Heart right ventricle (tissue), 16 donors: ENCODE measurements at regions of chr4 and their contacts with region 1.

Region 1: GRCh38 chr4:3106339-3107186 is 32.1 kb downstream of the HTT start:
- DNase-seq: peak; percentile 85 to 88
- ATAC-seq: peak; percentile 94 to 98 (median 98)
- H3K4me3 ChIP-seq: no peak overlapping the region
- H3K27ac ChIP-seq: peak overlapping the region in 5 of 10 donors; percentile 19 to 70 (median 57)
- H3K4me1 ChIP-seq: peaks cover 14 to 44% (median 29%) of the 10 kb centered on the region in 9 donors
- H3K27me3 ChIP-seq: no peaks in the 10 kb centered on the region
- CTCF ChIP-seq: peak; percentile 96 to 100 (median 98)

Region 2: DNA sequence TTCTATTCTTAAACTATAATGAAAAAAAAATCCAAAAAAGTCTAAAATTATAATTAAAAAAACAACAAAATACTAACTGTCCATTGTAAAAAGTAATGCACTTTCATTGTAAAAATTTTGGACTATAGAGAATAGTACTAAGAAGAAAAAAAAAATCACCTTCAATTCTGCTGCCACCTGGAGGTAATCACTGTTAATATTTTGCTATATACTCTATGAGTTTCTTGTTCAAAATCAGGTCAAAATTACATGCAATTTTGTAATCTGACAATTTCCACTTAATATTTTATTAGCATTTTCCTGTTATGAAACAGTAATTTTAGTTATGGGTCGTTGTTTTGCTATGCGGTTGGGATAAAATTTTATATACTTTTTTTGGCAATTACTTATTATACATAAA is 29.9 kb after region 1 on chr4:
- intact Hi-C with region 1: loop called in 2 of 10 experiments (anchors 1 to 2 kb)
- DNase-seq: no peak
- ATAC-seq: no peak
- H3K4me3 ChIP-seq: no peak overlapping the region
- H3K27ac ChIP-seq: no peak overlapping the region
- H3K4me1 ChIP-seq: peaks cover 0 to 4% (median 0%) of the 10 kb centered on the region in 9 donors
- H3K27me3 ChIP-seq: no peaks in the 10 kb centered on the region
- CTCF ChIP-seq: peak in 8 of 9 donors; percentile 12 to 60 (median 42)

Region 3: DNA sequence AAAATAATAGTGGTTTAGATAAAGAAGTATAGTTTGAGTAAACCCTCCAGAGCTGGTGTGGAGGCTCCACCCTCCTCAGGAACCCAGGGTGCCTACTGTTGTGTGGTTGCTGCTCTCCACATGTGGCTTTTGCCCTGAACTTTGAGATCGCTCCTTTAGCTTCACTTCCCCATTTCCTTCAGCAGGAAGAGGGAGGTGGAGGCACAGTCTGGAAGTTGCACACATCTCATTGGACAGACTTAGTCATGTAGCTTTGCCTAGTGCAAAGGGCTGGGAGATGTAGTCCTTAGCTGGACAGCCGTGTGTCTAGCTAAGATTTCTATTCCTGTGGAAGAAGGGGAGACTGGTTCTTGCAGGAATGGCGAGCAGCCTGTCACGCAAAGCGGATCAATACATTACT is 224.1 kb after region 1 on chr4:
- intact Hi-C with region 1: loop called in 1 of 10 experiments (anchors 10 kb)
- DNase-seq: no peak
- ATAC-seq: peak in 4 of 8 donors; percentile 35 to 59 (median 46)
- H3K4me3 ChIP-seq: no peak overlapping the region
- H3K27ac ChIP-seq: peak overlapping the region in 4 of 10 donors; percentile 41 to 86 (median 78)
- H3K4me1 ChIP-seq: peaks cover 0 to 51% (median 22%) of the 10 kb centered on the region in 9 donors
- H3K27me3 ChIP-seq: no peaks in the 10 kb centered on the region
- CTCF ChIP-seq: no peak

Region 4: DNA sequence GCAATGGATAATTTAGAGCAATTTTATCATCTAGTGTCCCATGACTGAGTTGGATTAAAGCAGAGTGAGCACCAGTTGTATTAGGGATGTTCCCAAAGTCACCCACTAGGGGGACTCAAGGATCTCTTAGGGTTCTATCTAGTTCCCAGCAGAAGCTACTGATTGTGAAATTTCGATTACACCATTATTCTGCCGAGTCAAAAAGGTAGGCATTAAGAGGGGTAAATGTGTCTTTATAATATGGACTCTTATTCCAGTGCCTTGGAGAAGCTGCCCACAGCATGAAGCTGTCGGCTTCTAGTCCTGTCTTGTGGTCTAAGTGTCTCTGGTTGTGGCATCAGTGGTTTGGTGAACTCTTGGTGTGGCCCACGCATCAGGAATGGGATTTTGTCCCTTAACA is 239.6 kb after region 1 on chr4:
- intact Hi-C with region 1: loop called in 1 of 10 experiments (anchors 5 kb)
- DNase-seq: peak in 1 of 2 donors; percentile 74
- ATAC-seq: peak; percentile 84 to 93 (median 92)
- H3K4me3 ChIP-seq: no peak overlapping the region
- H3K27ac ChIP-seq: no peak overlapping the region
- H3K4me1 ChIP-seq: peaks cover 0 to 21% (median 4%) of the 10 kb centered on the region in 9 donors
- H3K27me3 ChIP-seq: no peaks in the 10 kb centered on the region
- CTCF ChIP-seq: peak; percentile 84 to 94 (median 91)

Region 5: DNA sequence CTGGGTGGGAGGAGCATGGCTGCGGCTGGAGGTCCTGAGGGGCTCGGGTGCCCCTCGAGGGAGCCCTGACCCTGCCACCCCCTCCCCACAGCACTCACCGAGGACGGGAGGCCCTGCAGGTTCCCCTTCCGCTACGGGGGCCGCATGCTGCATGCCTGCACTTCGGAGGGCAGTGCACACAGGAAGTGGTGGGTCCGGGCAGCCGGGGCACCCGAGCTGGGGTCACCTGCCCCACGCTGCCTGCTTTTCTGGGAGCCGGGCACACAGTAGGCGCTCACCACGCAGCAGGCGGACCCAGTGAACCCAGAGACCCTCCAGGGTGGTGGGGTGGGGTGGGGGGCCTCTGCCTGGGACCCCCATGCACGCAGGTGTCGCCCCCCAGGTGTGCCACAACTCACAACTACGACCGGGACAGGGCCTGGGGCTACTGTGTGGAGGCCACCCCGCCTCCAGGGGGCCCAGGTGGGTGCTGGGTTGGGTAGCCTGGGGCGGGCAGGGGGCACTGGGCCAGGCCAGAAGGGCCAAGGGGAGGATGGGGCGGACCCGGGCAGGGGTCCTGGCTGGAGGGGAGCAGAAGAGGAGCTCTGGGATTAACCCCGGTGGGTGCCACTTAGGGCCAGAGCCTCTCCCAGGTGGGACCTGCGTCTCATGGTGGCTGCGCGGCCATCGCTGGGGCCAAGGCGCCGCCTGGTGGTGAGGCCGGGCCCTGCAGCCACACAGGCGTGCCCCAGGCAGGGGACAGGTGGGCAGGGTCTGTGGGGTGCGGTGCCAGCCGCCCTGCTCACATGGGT is 336.6 kb after region 1 on chr4:
- intact Hi-C with region 1: loop called in 3 of 10 experiments (anchors 5 to 10 kb)
- DNase-seq: peak in 1 of 2 donors; percentile 54
- ATAC-seq: peak; percentile 51 to 73 (median 62)
- H3K4me3 ChIP-seq: no peak overlapping the region
- H3K27ac ChIP-seq: no peak overlapping the region
- H3K4me1 ChIP-seq: peaks cover 0 to 5% (median 0%) of the 10 kb centered on the region in 9 donors
- H3K27me3 ChIP-seq: no peaks in the 10 kb centered on the region
- CTCF ChIP-seq: peak; percentile 94 to 100 (median 99)

Region 6: DNA sequence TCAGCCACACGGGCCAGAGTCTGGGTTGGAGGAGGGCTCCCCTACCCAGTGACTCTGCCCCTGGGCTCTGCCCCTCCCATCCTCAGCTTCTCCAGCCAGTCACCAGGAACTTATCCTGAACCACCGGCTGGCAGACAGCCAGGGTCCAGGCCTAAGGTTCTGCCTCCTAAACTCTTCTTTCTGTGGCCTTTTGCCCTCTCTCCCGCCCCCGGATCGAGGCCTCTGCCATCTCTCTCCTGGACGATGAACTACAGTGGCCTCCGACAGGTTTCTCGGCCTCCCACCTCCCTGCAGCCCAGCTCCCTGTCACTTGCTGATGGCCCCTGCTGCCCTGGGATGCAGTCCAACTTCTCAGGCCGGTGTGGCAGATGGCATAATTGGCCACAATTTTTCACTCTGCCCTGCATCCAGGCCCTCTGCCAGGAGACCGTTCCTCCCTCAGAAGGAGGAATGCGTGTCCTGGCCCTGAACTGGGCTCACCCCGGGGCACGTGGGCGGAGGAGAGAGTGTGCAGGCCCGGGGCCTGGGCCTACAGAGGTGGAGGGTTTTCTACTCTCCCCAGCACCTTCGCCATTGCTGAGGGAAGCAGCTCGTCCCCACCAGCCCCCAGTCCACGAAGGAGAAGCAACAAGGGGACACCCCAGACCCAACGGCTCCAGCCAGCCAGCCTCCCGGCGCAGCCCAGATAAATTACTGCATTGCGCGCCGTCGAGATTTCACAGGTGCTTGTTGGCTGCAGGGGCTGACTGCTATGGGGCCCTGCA is 507.6 kb after region 1 on chr4:
- intact Hi-C with region 1: loop called in 1 of 10 experiments (anchors 5 kb)
- DNase-seq: peak; percentile 22 to 41
- ATAC-seq: peak; percentile 28 to 83 (median 67)
- H3K4me3 ChIP-seq: no peak overlapping the region
- H3K27ac ChIP-seq: no peak overlapping the region
- H3K4me1 ChIP-seq: peaks cover 0 to 4% (median 0%) of the 10 kb centered on the region in 9 donors
- H3K27me3 ChIP-seq: peaks cover 0 to 8% (median 0%) of the 10 kb centered on the region in 7 donors
- CTCF ChIP-seq: no peak

Region 7: GRCh38 chr4:3880615-3881120 is 774.1 kb after region 1 on chr4:
- intact Hi-C with region 1: loop called in 1 of 10 experiments (anchors 10 kb)
- DNase-seq: peak; percentile 63 to 71
- ATAC-seq: peak; percentile 83 to 93 (median 90)
- H3K4me3 ChIP-seq: no peak overlapping the region
- H3K27ac ChIP-seq: no peak overlapping the region
- H3K4me1 ChIP-seq: peaks cover 0 to 17% (median 10%) of the 10 kb centered on the region in 9 donors
- H3K27me3 ChIP-seq: peaks cover 5 to 83% (median 70%) of the 10 kb centered on the region in 7 donors
- CTCF ChIP-seq: peak; percentile 49 to 76 (median 71)